Spleen (tissue), 13 donors: ENCODE measurements at regions of chr9 and their contacts with region 1.

Region 1: DNA sequence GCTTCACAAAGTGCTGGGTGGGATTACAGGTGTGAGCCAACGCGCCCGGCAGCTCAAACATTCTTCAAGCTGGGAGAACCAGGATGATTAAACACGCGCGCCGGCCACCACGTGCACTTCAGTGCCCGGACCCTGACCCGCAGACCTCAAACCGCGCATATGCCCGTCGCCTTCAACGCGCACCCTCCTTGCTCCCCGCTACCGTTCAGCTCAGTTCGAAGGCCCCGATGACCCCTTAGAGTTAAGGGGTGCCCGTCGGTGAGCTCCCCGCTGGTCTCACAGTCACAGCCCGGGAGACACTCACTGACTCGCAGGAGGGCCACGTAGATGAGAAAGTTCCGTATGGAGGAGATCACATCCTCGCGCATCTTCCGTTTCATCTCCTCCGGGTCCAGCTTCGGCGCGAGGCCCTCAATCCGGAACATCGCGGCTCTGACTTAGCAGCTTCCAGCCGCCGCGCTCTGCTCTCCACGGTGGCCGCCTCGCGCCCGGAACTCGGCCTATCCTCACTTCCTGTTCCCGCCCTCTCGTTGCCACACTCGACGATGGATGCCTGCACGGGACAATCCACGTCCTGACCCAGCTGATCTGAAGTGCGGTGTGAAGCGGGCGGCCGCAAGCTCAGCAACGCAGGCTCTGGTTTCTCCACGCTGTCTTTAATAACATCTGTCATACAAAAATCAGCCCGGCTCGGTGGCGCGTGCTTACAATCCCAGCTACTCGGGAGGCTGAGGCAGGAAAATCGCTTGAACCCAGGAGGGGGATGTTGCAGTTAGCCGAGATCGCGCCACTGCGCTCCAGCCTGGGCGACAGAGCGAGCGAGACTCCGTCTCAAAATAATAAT is at the start of gene TOMM5:
- DNase-seq: peak; percentile 97
- H3K4me3 ChIP-seq: peak within 1 kb of the TSS; percentile 71 to 93 (median 82)
- H3K27ac ChIP-seq: peak within 1 kb of the TSS; percentile 78 to 93 (median 88)
- H3K4me1 ChIP-seq: peaks cover 20 to 70% (median 54%) of the 10 kb centered on the region in 6 donors
- H3K27me3 ChIP-seq: peaks cover 0 to 6% (median 0%) of the 10 kb centered on the region in 7 donors
- CTCF ChIP-seq: peak in 2 of 11 experiments; percentile 16 to 37
- POLR2A ChIP-seq: peak in 2 of 3 donors; percentile 17 to 63
- total RNA-seq, gene TOMM5: 54.1 to 108 (median 65.5) TPM

Region 2: GRCh38 chr9:37485389-37486219 is 106.7 kb before region 1 on chr9 and contains the start of gene POLR1E:
- intact Hi-C with region 1: loop called (anchors 10 kb)
- DNase-seq: peak; percentile 99
- H3K4me3 ChIP-seq: peak within 1 kb of the TSS; percentile 56 to 93 (median 73)
- H3K27ac ChIP-seq: peak within 1 kb of the TSS in 7 of 8 donors; percentile 64 to 88 (median 77)
- H3K4me1 ChIP-seq: peaks cover 15 to 47% (median 30%) of the 10 kb centered on the region in 6 donors
- H3K27me3 ChIP-seq: peaks cover 0 to 9% (median 0%) of the 10 kb centered on the region in 7 donors
- CTCF ChIP-seq: peak in 2 of 11 experiments; percentile 15 to 28
- POLR2A ChIP-seq: peak in 2 of 3 donors; percentile 24 to 51
- total RNA-seq, gene POLR1E: 14.4 to 21.0 (median 18.5) TPM